ENCODE measurements at regions of chr2 and their contacts with region 1.

Region 1: GRCh38 chr2:161954103-161954502 is 119.9 kb downstream of the DPP4 start:
- DNase-seq: no peak
- H3K4me3 Mint-ChIP-seq: peak overlapping the region; percentile 37
- H3K27ac Mint-ChIP-seq: peak overlapping the region; percentile 94
- H3K4me1 Mint-ChIP-seq: peaks cover 66% of the 10 kb centered on the region
- H3K27me3 Mint-ChIP-seq: no peaks in the 10 kb centered on the region

Region 2: GRCh38 chr2:160224060-160224459 is 1730.0 kb before region 1 on chr2:
- intact Hi-C with region 1: loop called (anchors 10 kb)
- DNase-seq: no peak
- H3K4me3 Mint-ChIP-seq: no peak overlapping the region
- H3K27ac Mint-ChIP-seq: peak overlapping the region; percentile 76
- H3K4me1 Mint-ChIP-seq: peaks cover 45% of the 10 kb centered on the region
- H3K27me3 Mint-ChIP-seq: peaks cover 10% of the 10 kb centered on the region

Region 3: GRCh38 chr2:161172901-161173540 is 781.1 kb before region 1 on chr2:
- intact Hi-C with region 1: loop called (anchors 2 kb)
- DNase-seq: no peak
- H3K4me3 Mint-ChIP-seq: peak overlapping the region; percentile 11
- H3K27ac Mint-ChIP-seq: peak overlapping the region; percentile 72
- H3K4me1 Mint-ChIP-seq: peaks cover 62% of the 10 kb centered on the region
- H3K27me3 Mint-ChIP-seq: no peaks in the 10 kb centered on the region

Region 4: GRCh38 chr2:161965994-161966393 is 11.9 kb after region 1 on chr2:
- intact Hi-C with region 1: loop called (anchors 1 kb)
- DNase-seq: no peak
- H3K4me3 Mint-ChIP-seq: no peak overlapping the region
- H3K27ac Mint-ChIP-seq: no peak overlapping the region
- H3K4me1 Mint-ChIP-seq: peaks cover 51% of the 10 kb centered on the region
- H3K27me3 Mint-ChIP-seq: no peaks in the 10 kb centered on the region

Region 5: DNA sequence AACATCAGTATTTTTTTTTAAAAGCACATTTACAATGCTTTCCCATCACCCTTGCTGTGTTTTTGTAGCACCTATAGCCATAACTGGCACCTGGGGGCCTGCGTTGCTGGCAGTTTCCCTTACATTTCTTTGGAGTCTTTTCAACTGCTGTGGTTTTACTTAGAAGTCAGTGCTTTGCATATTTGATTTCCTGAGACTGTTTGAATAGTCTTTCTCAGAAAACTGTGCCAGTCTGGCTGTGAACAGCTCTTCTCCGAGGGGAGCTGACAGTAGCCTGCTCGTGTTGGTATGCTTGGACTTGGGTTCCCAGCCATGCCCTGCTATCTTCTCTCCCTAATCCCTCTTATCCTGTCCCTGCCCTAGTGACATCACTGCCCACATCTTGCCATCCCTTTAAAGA is 38.4 kb after region 1 on chr2:
- intact Hi-C with region 1: loop called (anchors 1 kb)
- DNase-seq: peak; percentile 61
- H3K4me3 Mint-ChIP-seq: peak overlapping the region; percentile 76
- H3K27ac Mint-ChIP-seq: peak overlapping the region; percentile 95
- H3K4me1 Mint-ChIP-seq: peaks cover 68% of the 10 kb centered on the region
- H3K27me3 Mint-ChIP-seq: no peaks in the 10 kb centered on the region

Region 6: GRCh38 chr2:162058973-162059668 is 105.0 kb after region 1 on chr2:
- intact Hi-C with region 1: loop called (anchors 1 kb)
- DNase-seq: no peak
- H3K4me3 Mint-ChIP-seq: peak overlapping the region; percentile 52
- H3K27ac Mint-ChIP-seq: peak overlapping the region; percentile 87
- H3K4me1 Mint-ChIP-seq: peaks cover 87% of the 10 kb centered on the region
- H3K27me3 Mint-ChIP-seq: no peaks in the 10 kb centered on the region

Region 7: DNA sequence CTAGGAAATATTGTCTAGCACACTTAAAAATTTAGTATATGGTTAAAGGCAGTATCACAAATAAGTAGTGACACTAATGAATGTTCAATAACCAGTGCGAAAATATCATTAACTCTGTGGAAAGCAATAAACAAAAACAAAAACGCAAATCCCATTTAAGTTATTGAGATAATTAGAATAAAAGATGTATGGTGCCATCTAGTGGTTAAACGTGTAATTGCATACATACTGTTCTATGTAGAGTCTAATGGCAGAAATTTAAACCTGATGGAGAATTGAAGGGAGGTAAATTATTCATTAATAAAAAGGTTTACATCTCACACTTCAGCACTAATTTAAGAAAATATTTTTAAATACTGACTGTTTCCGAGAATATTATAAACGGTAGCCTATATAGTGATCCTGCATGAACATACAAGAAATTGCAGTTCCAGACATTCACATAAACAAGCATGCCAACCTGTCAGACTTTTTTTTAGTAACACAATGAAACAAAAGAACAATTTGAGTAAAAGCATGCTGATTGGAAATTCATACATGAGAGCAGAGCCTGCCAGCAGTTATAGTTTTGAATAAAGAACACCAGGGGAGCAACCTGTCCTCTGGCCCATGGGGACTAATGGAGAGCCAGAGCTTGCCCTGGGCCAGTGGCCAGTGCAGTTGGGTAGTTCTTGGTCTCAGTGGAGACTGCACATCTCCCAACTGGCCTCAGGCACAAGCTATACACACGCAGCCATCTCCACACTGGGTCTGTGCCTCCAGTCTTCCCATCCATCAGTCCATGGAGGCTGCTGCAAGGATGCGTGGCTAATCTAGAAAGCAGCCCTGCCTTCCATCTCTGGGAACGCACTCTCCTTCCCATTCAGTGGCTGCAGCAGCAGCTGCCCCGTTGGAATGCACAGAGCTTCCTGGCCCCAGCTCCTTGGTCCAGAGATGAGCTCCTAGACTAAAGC is 170.0 kb after region 1 on chr2:
- intact Hi-C with region 1: loop called (anchors 1 kb)
- DNase-seq: no peak
- H3K4me3 Mint-ChIP-seq: no peak overlapping the region
- H3K27ac Mint-ChIP-seq: no peak overlapping the region
- H3K4me1 Mint-ChIP-seq: peaks cover 20% of the 10 kb centered on the region
- H3K27me3 Mint-ChIP-seq: peaks cover 9% of the 10 kb centered on the region

Measured in activated T-helper 2 cell treated with anti-CD3 and anti-CD28 coated beads, Interferon-gamma antibody, Interleukin-2, Interleukin-4, amounts not matched to agents 10 μg/mL and 5 μg/mL and 100 μg/mL, durations not matched to agents 14 hours and 24 hours and 36 hours (primary cell).